Activated naive CD4-positive, alpha-beta T cell treated with anti-CD3 and anti-CD28 coated beads for 36 hours (primary cell): ENCODE measurements at regions of chr11 and their contacts with region 1.

Region 1: GRCh38 chr11:14643697-14644225 is at the start of gene PDE3B:
- DNase-seq: peak; percentile 85
- H3K4me3 Mint-ChIP-seq: peak within 1 kb of the TSS; percentile 81
- H3K27ac Mint-ChIP-seq: peak within 1 kb of the TSS; percentile 91
- H3K4me1 Mint-ChIP-seq: peaks cover 45% of the 10 kb centered on the region
- H3K27me3 Mint-ChIP-seq: no peaks in the 10 kb centered on the region
- total RNA-seq, gene PDE3B: 16.5 to 17.4 TPM

Region 2: DNA sequence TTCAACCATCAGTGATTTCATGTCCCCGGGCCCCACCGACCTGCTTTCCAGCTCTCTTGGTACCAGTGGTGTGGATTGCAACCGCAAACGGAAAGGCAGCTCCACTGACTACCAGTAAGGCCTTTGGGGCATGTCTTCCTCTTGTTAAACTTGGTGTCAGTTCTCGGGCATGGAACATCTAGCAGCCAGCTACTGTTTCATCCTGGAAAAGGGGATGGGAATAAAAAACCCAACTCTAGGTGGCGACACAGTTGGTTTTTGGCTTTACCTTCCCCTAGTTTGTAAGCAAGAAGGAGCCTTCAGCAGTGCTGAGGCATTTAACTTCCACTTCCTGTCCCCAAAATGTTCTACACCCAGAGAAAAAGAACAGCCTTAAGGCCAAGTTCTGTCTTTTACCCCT is 1289.4 kb before region 1 on chr11:
- CTCF ChIA-PET with region 1: no interaction called
- intact Hi-C with region 1: no loop called
- DNase-seq: no peak
- H3K4me3 Mint-ChIP-seq: no peak overlapping the region
- H3K27ac Mint-ChIP-seq: no peak overlapping the region
- H3K4me1 Mint-ChIP-seq: no peaks in the 10 kb centered on the region
- H3K27me3 Mint-ChIP-seq: no peaks in the 10 kb centered on the region

Region 3: GRCh38 chr11:14519917-14520746 is 123.6 kb before region 1 on chr11 and contains the start of gene PSMA1:
- CTCF ChIA-PET with region 1: interaction called, 8 read pairs
- intact Hi-C with region 1: loop called (anchors 1 kb)
- DNase-seq: peak; percentile 98
- H3K4me3 Mint-ChIP-seq: peak within 1 kb of the TSS; percentile 96
- H3K27ac Mint-ChIP-seq: peak within 1 kb of the TSS; percentile 97
- H3K4me1 Mint-ChIP-seq: peaks cover 24% of the 10 kb centered on the region
- H3K27me3 Mint-ChIP-seq: no peaks in the 10 kb centered on the region
- total RNA-seq, gene PSMA1: 367 to 375 TPM

Region 4: GRCh38 chr11:14578541-14578956 is 65.2 kb before region 1 on chr11:
- CTCF ChIA-PET with region 1: interaction called, 5 read pairs
- intact Hi-C with region 1: loop called (anchors 1 kb)
- DNase-seq: peak; percentile 67
- H3K4me3 Mint-ChIP-seq: peak overlapping the region; percentile 11
- H3K27ac Mint-ChIP-seq: peak overlapping the region; percentile 75
- H3K4me1 Mint-ChIP-seq: peaks cover 47% of the 10 kb centered on the region
- H3K27me3 Mint-ChIP-seq: no peaks in the 10 kb centered on the region

Region 5: GRCh38 chr11:14668731-14669301 is 25.1 kb after region 1 on chr11:
- CTCF ChIA-PET with region 1: interaction called, 3 read pairs
- intact Hi-C with region 1: loop called (anchors 2 kb)
- DNase-seq: no peak
- H3K4me3 Mint-ChIP-seq: no peak overlapping the region
- H3K27ac Mint-ChIP-seq: no peak overlapping the region
- H3K4me1 Mint-ChIP-seq: peaks cover 39% of the 10 kb centered on the region
- H3K27me3 Mint-ChIP-seq: no peaks in the 10 kb centered on the region

Region 6: GRCh38 chr11:14764579-14765527 is 121.1 kb after region 1 on chr11:
- CTCF ChIA-PET with region 1: interaction called, 4 read pairs
- intact Hi-C with region 1: loop called (anchors 1 kb)
- DNase-seq: peak; percentile 58
- H3K4me3 Mint-ChIP-seq: peak overlapping the region; percentile 41
- H3K27ac Mint-ChIP-seq: no peak overlapping the region
- H3K4me1 Mint-ChIP-seq: peaks cover 45% of the 10 kb centered on the region
- H3K27me3 Mint-ChIP-seq: no peaks in the 10 kb centered on the region

Region 7: DNA sequence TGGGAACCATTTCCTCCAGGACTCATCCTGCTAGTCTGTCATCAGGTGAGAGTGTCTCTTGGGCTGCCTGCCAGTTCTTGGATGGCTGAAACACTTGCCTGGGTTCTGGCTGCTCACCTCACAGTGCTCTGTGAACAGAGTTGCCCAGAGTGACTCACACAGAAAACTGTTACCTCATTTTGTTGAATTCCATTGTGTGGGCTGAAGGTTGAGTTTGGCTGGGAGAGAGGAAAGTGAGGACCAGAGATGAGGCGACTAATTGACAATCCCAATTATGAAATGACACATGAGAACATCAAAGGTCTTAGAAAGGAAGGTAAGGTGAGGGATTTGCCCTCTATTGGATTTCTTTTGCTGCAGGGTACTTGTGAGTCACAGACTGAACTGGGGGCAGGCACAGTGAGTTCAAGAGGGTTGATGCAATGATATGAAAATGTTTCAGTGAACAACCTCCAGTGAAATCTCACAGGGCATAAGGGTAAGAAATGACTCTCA is 409.5 kb after region 1 on chr11:
- CTCF ChIA-PET with region 1: no interaction called
- intact Hi-C with region 1: loop called (anchors 2 kb)
- DNase-seq: peak; percentile 75
- H3K4me3 Mint-ChIP-seq: no peak overlapping the region
- H3K27ac Mint-ChIP-seq: peak overlapping the region; percentile 83
- H3K4me1 Mint-ChIP-seq: peaks cover 26% of the 10 kb centered on the region
- H3K27me3 Mint-ChIP-seq: peaks cover 2% of the 10 kb centered on the region